Naive thymus-derived CD4-positive, alpha-beta T cell (primary cell): ENCODE measurements at regions of chr6 and their contacts with region 1.

Region 1: DNA sequence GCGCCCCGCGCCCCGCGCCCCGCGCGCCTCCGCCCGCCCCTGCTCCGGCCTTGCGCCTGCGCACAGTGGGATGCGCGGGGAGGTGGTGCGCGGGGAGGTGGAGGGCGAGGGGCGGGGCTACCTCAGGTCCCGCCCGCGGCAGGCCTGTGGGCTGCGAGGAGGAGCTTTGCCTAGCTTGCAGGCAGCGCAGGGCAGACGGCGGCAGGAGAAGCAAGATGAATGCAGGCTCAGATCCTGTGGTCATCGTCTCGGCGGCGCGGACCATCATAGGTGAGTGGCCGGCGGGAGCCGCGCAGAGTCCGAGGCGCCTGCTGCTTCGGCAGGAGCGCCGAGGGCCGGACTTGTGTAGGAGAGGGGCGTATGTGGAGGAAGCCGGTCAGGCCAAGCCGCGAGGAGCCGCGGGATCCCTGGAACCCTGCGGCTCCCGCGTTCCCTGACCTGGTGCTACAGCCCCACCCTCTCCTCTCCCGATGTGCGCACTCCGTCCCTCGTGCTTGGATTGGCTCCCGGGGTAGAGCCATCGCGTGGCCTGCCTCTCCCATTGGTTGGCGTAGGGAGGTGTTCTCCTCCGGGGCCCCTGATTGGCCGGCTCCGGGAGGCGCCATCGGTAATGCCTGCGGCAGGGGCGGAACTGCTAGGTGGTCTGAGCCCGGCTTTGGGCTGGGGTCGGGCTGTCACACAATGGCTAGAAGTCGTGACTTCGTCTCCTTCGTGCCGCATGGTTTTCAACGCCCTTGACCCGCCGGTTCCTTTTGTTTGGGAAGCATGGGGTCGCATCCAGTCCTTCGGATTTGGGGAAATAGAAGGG is at the start of gene ACAT2:
- DNase-seq: peak; percentile 89 to 95 (median 93)
- ATAC-seq: peak; percentile 94
- H3K4me3 ChIP-seq: peak within 1 kb of the TSS; percentile 99
- H3K4me3 Mint-ChIP-seq: peak within 1 kb of the TSS; percentile 84 to 97 (median 94)
- H3K27ac ChIP-seq: peak within 1 kb of the TSS; percentile 98
- H3K27ac Mint-ChIP-seq: peak within 1 kb of the TSS; percentile 93 to 99 (median 97)
- H3K4me1 ChIP-seq: peaks cover 6 to 15% of the 10 kb centered on the region in 2 donors
- H3K4me1 Mint-ChIP-seq: peaks cover 23 to 49% (median 34%) of the 10 kb centered on the region in 7 donors
- H3K27me3 ChIP-seq: no peaks in the 10 kb centered on the region
- H3K27me3 Mint-ChIP-seq: no peaks in the 10 kb centered on the region
- total RNA-seq, gene ACAT2: 18.5 to 53.9 (median 28.0) TPM

Region 2: DNA sequence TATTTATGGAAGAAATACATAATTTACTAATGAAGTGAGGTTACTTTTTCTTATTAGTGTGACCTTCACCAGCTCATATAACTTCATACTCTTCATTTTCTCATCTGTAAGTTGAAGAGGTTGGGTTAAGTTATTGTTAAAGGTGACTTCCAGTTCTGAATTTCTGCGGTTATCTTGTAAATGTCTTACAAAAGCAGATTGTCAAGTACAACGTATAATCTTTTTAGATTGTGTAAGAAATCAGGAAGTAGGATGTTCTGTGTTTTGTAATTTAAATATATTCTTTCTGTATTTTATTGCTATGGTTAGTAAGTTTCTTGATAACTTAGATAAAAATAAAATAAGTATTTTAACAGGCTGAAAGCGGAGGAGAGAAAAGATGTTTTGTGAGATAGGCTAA is 22.7 kb before region 1 on chr6:
- CTCF ChIA-PET with region 1: no interaction called
- POLR2A ChIA-PET with region 1: interaction called, 6 read pairs
- intact Hi-C with region 1: loop called in 1 of 2 experiments (anchors 2 kb)
- DNase-seq: no peak
- ATAC-seq: no peak
- H3K4me3 ChIP-seq: no peak overlapping the region
- H3K4me3 Mint-ChIP-seq: no peak overlapping the region
- H3K27ac ChIP-seq: no peak overlapping the region
- H3K27ac Mint-ChIP-seq: peak overlapping the region in 4 of 9 donors; percentile 38 to 82 (median 60)
- H3K4me1 ChIP-seq: peaks cover 10 to 15% of the 10 kb centered on the region in 2 donors
- H3K4me1 Mint-ChIP-seq: peaks cover 11 to 56% (median 49%) of the 10 kb centered on the region in 7 donors
- H3K27me3 ChIP-seq: no peaks in the 10 kb centered on the region
- H3K27me3 Mint-ChIP-seq: no peaks in the 10 kb centered on the region